Heart right ventricle (tissue), 16 donors: ENCODE measurements at regions of chr20 and their contacts with region 1.

Region 1: GRCh38 chr20:57596998-57597939 is 23.0 kb downstream of the ZBP1 start:
- DNase-seq: peak; percentile 60 to 76
- ATAC-seq: peak; percentile 81 to 92 (median 84)
- H3K4me3 ChIP-seq: peak overlapping the region in 4 of 10 donors; percentile 8 to 34 (median 26)
- H3K27ac ChIP-seq: no peak overlapping the region
- H3K4me1 ChIP-seq: peaks cover 0 to 14% (median 7%) of the 10 kb centered on the region in 9 donors
- H3K27me3 ChIP-seq: peaks cover 0 to 28% (median 4%) of the 10 kb centered on the region in 7 donors
- CTCF ChIP-seq: peak; percentile 91 to 98 (median 96)

Region 2: GRCh38 chr20:57374931-57375651 is 222.2 kb before region 1 on chr20:
- intact Hi-C with region 1: loop called in 6 of 10 experiments (anchors 10 kb)
- DNase-seq: no peak
- ATAC-seq: peak; percentile 51 to 82 (median 74)
- H3K4me3 ChIP-seq: peak overlapping the region in 2 of 10 donors; percentile 5 to 37
- H3K27ac ChIP-seq: peak overlapping the region in 5 of 10 donors; percentile 9 to 81 (median 35)
- H3K4me1 ChIP-seq: peaks cover 0 to 25% (median 12%) of the 10 kb centered on the region in 9 donors
- H3K27me3 ChIP-seq: no peaks in the 10 kb centered on the region
- CTCF ChIP-seq: no peak

Region 3: GRCh38 chr20:57391074-57391554 is 206.2 kb before region 1 on chr20 and contains the start of gene RBM38:
- intact Hi-C with region 1: loop called in 4 of 10 experiments (anchors 10 kb)
- DNase-seq: peak; percentile 60 to 78
- ATAC-seq: peak; percentile 43 to 83 (median 66)
- H3K4me3 ChIP-seq: peak within 1 kb of the TSS; percentile 69 to 84 (median 73)
- H3K27ac ChIP-seq: peak within 1 kb of the TSS; percentile 88 to 97 (median 90)
- H3K4me1 ChIP-seq: peaks cover 14 to 64% (median 58%) of the 10 kb centered on the region in 9 donors
- H3K27me3 ChIP-seq: no peaks in the 10 kb centered on the region
- CTCF ChIP-seq: no peak
- total RNA-seq, gene RBM38: 35.5 to 119 (median 50.2) TPM

Region 4: DNA sequence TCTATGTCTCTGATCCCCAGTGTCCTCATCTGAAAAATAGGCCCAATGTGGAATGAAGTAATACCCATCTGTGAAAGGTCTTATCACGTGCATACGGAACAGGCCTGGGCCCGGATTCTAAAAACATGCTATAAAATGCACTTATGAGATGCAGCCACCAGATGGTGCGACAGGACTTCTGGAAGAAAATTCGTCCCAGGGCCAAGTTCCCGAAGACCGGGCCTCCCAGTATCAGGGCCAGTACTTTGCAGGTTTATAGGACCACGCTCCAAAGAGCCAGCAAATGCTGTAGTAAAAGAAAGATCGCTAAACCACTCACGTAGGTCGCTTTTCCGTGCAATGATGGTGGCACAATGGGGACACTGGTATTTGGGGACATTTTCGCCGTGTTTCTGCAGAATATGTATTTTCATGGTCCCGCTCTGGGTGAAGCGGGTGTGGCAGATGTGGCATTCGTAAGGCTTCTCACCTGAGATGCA is 83.0 kb before region 1 on chr20:
- intact Hi-C with region 1: loop called (anchors 1 to 2 kb)
- DNase-seq: peak; percentile 31 to 72
- ATAC-seq: peak; percentile 70 to 87 (median 81)
- H3K4me3 ChIP-seq: no peak overlapping the region
- H3K27ac ChIP-seq: no peak overlapping the region
- H3K4me1 ChIP-seq: peaks cover 0 to 8% (median 0%) of the 10 kb centered on the region in 9 donors
- H3K27me3 ChIP-seq: peaks cover 0 to 31% (median 7%) of the 10 kb centered on the region in 7 donors
- CTCF ChIP-seq: peak; percentile 58 to 87 (median 78)

Region 5: GRCh38 chr20:58179432-58180099 is 582.3 kb after region 1 on chr20:
- intact Hi-C with region 1: loop called in 2 of 10 experiments (anchors 1 kb)
- DNase-seq: peak; percentile 16 to 72
- ATAC-seq: peak; percentile 65 to 83 (median 78)
- H3K4me3 ChIP-seq: peak overlapping the region in 8 of 10 donors; percentile 21 to 48 (median 32)
- H3K27ac ChIP-seq: no peak overlapping the region
- H3K4me1 ChIP-seq: peaks cover 0 to 26% (median 12%) of the 10 kb centered on the region in 9 donors
- H3K27me3 ChIP-seq: peaks cover 0 to 36% (median 16%) of the 10 kb centered on the region in 7 donors
- CTCF ChIP-seq: peak; percentile 94 to 100 (median 99)

Region 6: DNA sequence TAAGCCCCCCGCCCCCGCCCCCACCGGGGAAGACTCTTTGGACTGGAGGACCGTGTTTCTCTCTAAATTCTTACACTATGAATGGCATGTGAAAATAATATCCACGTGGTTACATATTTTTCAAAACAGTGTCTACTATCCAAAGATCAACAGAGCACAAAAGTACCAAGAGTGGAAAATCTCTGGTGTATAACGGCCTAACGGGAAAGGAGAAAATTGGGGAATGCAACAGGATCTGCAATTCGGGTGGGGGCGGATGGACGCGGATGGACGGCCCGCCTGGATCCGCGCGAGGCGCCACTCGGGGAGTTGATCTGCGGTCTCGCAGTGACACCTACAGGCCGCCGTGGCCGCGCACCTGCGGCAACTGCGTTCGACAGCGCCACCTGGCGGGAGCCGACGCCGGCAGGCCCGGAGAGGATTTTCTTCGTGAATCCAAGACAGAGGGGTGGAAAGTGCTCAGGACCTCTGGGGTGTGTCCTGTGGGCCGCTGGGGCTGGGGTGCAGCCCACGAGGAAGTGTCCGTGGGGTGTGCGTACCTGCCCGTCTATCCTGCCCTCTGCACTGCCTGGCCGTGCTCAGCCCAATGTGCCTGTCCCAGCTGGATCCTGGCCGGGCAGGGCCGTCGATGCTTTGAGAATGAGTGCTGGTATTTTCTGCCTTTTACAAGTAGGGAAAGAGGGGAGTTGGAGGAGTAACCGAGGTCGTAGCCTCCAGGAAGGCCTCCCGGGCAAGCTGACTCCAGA is 612.6 kb after region 1 on chr20:
- intact Hi-C with region 1: loop called (anchors 1 to 5 kb)
- DNase-seq: peak; percentile 75 to 89
- ATAC-seq: peak; percentile 79 to 92 (median 90)
- H3K4me3 ChIP-seq: no peak overlapping the region
- H3K27ac ChIP-seq: no peak overlapping the region
- H3K4me1 ChIP-seq: peaks cover 0 to 3% (median 0%) of the 10 kb centered on the region in 9 donors
- H3K27me3 ChIP-seq: peaks cover 0 to 24% (median 17%) of the 10 kb centered on the region in 7 donors
- CTCF ChIP-seq: peak; percentile 100

Region 7: GRCh38 chr20:58388882-58389323 is 791.6 kb after region 1 on chr20 and contains the start of gene VAPB:
- intact Hi-C with region 1: no loop called
- DNase-seq: peak; percentile 94 to 97
- ATAC-seq: peak; percentile 99 to 100 (median 100)
- H3K4me3 ChIP-seq: peak within 1 kb of the TSS; percentile 68 to 95 (median 82)
- H3K27ac ChIP-seq: peak within 1 kb of the TSS; percentile 70 to 99 (median 96)
- H3K4me1 ChIP-seq: peaks cover 3 to 47% (median 38%) of the 10 kb centered on the region in 9 donors
- H3K27me3 ChIP-seq: no peaks in the 10 kb centered on the region
- CTCF ChIP-seq: no peak
- total RNA-seq, gene VAPB: 59.9 to 89.9 (median 70.8) TPM